MCF 10A (cell line): ENCODE measurements at regions of chr1 and their contacts with region 1.

Region 1: DNA sequence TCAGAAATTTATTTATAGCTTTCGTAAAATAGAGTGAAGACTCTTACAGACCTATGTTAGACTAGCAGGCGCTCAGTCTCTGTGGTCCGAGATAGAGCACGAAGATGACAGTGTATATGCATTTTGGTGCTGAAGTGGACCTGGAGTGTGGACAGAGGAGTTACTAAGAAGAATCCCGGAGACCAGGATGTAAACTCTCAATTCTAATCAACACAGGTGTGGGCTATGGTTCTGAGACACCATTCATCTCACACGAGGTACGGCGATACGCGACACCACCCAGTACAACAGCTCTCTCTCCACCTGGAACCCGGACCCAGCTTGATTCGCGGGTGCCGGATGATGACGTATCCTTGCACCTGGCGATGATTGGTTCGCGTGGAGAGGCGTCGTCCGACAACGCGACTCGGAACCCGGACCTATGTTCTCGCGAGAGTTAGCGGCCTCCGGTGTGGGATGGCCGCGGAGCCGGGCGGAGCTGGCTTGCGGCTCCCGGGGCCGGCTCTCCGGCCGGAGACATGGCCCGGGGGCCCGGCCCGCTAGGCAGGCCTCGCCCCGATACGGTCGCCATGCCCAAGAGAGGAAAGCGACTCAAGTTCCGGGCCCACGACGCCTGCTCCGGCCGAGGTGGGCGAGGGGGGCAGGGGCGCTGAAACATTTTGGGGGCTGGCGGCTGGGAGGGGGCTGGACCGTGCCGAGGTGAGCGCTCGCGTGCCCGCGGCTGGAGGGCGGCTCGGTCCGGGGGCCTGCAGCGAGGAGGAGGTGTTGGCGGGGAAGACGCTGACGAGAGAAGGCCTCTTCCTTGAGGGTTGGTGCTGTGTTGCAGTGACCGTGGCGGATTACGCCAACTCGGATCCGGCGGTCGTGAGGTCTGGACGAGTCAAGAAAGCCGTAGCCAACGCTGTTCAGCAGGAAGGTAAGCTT is at the start of gene TMEM183A:
- DNase-seq: peak; percentile 100
- H3K4me3 Mint-ChIP-seq: peak within 1 kb of the TSS; percentile 99
- H3K27ac Mint-ChIP-seq: peak within 1 kb of the TSS; percentile 98
- H3K4me1 Mint-ChIP-seq: peaks cover 24% of the 10 kb centered on the region
- H3K27me3 Mint-ChIP-seq: no peaks in the 10 kb centered on the region
- CTCF ChIP-seq: no peak
- total RNA-seq, gene TMEM183A: 104 and 108 TPM in 2 replicates

Region 2: DNA sequence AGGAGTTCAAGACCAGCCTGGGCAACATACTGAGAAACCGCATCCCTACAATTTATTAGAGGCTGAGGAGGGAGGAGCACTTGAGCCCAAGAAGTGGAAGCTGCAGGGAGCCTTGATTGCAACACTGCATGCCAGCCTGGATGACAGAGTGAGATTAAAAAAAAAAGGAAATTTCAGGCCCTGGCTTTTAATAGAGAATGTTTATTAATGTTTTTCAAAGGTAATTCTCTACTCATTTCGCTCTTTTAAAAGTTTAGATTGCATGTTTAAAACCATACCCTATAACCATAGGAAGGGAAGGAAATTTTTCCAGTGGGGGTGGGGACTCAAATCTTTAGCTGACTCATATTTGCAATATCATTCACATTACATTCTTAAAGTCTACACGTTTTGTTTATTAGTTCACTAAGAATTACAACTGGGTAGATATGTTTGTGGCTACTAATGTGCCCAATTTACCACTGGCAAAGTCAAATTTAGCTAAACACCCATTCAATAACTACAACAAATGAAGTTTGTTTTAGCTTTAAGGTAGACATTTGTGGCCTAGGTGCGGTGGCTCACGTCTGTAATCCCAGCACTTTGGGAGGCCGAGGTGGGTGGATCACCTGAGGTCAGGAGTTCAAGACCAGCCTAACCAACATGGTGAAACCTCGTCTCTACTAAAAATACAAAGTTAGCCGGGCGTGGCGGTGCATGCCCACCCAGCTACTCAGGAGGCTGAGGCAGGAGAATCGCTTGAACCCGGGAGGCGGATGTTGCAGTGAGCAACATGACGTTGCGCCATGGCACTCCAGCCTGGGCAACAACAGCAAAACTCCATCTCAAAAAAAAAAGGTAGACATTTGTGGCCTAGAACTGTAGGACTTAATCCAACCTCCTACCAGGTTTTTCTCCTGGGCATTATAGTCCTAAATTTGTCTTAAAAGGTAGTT is 203.9 kb before region 1 on chr1:
- CTCF ChIA-PET with region 1: no interaction called
- POLR2A ChIA-PET with region 1: interaction called, 16 read pairs
- intact Hi-C with region 1: no loop called
- DNase-seq: peak; percentile 88
- H3K4me3 Mint-ChIP-seq: peak overlapping the region; percentile 17
- H3K27ac Mint-ChIP-seq: peak overlapping the region; percentile 67
- H3K4me1 Mint-ChIP-seq: peaks cover 55% of the 10 kb centered on the region
- H3K27me3 Mint-ChIP-seq: no peaks in the 10 kb centered on the region
- CTCF ChIP-seq: no peak

Region 3: GRCh38 chr1:202888531-202889360 is 118.5 kb before region 1 on chr1 and contains the start of gene RABIF:
- CTCF ChIA-PET with region 1: no interaction called
- POLR2A ChIA-PET with region 1: interaction called, 18 read pairs
- intact Hi-C with region 1: no loop called
- DNase-seq: peak; percentile 99
- H3K4me3 Mint-ChIP-seq: peak within 1 kb of the TSS; percentile 97
- H3K27ac Mint-ChIP-seq: peak within 1 kb of the TSS; percentile 88
- H3K4me1 Mint-ChIP-seq: peaks cover 7% of the 10 kb centered on the region
- H3K27me3 Mint-ChIP-seq: no peaks in the 10 kb centered on the region
- CTCF ChIP-seq: no peak
- total RNA-seq, gene RABIF: 11.2 and 13.5 TPM in 2 replicates

Region 4: GRCh38 chr1:202952818-202953217 is 54.4 kb before region 1 on chr1:
- CTCF ChIA-PET with region 1: interaction called, 6 read pairs
- POLR2A ChIA-PET with region 1: interaction called, 55 read pairs
- intact Hi-C with region 1: no loop called
- DNase-seq: peak; percentile 93
- H3K4me3 Mint-ChIP-seq: peak overlapping the region; percentile 48
- H3K27ac Mint-ChIP-seq: peak overlapping the region; percentile 65
- H3K4me1 Mint-ChIP-seq: peaks cover 55% of the 10 kb centered on the region
- H3K27me3 Mint-ChIP-seq: no peaks in the 10 kb centered on the region
- CTCF ChIP-seq: no peak

Region 5: GRCh38 chr1:202968840-202969295 is 38.3 kb before region 1 on chr1:
- CTCF ChIA-PET with region 1: interaction called, 4 read pairs
- POLR2A ChIA-PET with region 1: interaction called, 47 read pairs
- intact Hi-C with region 1: no loop called
- DNase-seq: peak; percentile 85
- H3K4me3 Mint-ChIP-seq: no peak overlapping the region
- H3K27ac Mint-ChIP-seq: no peak overlapping the region
- H3K4me1 Mint-ChIP-seq: peaks cover 29% of the 10 kb centered on the region
- H3K27me3 Mint-ChIP-seq: peaks cover 3% of the 10 kb centered on the region
- CTCF ChIP-seq: peak; percentile 79

Region 6: GRCh38 chr1:203017692-203018091 is 10.5 kb after region 1 on chr1:
- CTCF ChIA-PET with region 1: interaction called, 6 read pairs
- POLR2A ChIA-PET with region 1: interaction called, 27 read pairs
- intact Hi-C with region 1: no loop called
- DNase-seq: no peak
- H3K4me3 Mint-ChIP-seq: no peak overlapping the region
- H3K27ac Mint-ChIP-seq: no peak overlapping the region
- H3K4me1 Mint-ChIP-seq: no peaks in the 10 kb centered on the region
- H3K27me3 Mint-ChIP-seq: no peaks in the 10 kb centered on the region
- CTCF ChIP-seq: no peak

Region 7: GRCh38 chr1:203084588-203085502 is 77.6 kb after region 1 on chr1:
- CTCF ChIA-PET with region 1: no interaction called
- POLR2A ChIA-PET with region 1: no interaction called
- intact Hi-C with region 1: no loop called
- DNase-seq: peak; percentile 41
- H3K4me3 Mint-ChIP-seq: no peak overlapping the region
- H3K27ac Mint-ChIP-seq: no peak overlapping the region
- H3K4me1 Mint-ChIP-seq: no peaks in the 10 kb centered on the region
- H3K27me3 Mint-ChIP-seq: peaks cover 21% of the 10 kb centered on the region
- CTCF ChIP-seq: peak; percentile 86

Region 8: GRCh38 chr1:203304919-203305808 is 298.0 kb after region 1 on chr1 and contains the start of gene BTG2:
- CTCF ChIA-PET with region 1: interaction called, 4 read pairs
- POLR2A ChIA-PET with region 1: interaction called, 14 read pairs
- intact Hi-C with region 1: no loop called
- DNase-seq: peak; percentile 96
- H3K4me3 Mint-ChIP-seq: peak within 1 kb of the TSS; percentile 71
- H3K27ac Mint-ChIP-seq: peak within 1 kb of the TSS; percentile 6
- H3K4me1 Mint-ChIP-seq: peaks cover 48% of the 10 kb centered on the region
- H3K27me3 Mint-ChIP-seq: no peaks in the 10 kb centered on the region
- CTCF ChIP-seq: no peak
- total RNA-seq, gene BTG2: 39.8 and 44.4 TPM in 2 replicates